ENCODE measurements at regions of chr11 and their contacts with region 1.

Region 1: GRCh38 chr11:121257289-121257688 is 35.3 kb upstream of the SC5D start:
- DNase-seq: peak; percentile 78 to 93 (median 84)
- H3K4me3 ChIP-seq: no peak overlapping the region
- H3K27ac ChIP-seq: peak overlapping the region in 1 of 2 experiments; percentile 43
- H3K4me1 ChIP-seq: peaks cover 4 to 21% (median 7%) of the 10 kb centered on the region in 4 experiments
- H3K27me3 ChIP-seq: no peaks in the 10 kb centered on the region

Region 2: DNA sequence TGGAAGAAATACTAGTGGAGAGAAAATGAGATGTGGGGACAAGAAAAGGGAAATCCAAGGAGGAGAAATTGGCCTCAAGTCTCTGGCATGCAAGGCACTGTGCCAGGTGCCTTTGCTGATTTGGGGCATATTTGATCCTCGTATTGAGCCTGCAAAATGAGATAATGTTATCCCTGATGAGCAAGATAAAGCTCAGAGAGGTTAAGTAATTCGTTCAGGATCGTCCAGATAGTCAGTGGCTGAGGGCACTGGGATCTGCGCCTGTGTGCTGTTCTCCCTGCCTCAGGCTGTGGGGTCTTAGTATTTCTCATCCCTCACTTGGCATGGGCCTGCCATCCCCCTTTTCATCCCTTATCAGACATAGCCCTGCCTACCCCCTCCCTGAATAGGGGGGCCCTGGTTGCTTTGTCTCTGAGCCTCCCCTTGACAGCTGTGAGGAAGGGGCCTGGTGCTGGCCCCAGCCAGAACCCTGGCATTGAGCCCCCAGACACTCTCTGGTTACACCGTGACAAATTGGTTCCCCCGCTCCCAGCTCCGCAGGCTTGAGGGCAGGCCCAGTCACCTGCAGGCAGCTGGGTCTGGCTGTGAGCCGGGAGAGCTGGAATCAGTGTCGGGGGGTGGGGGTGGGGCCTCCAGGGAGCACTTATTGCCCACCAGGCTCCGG is 1613.9 kb before region 1 on chr11:
- CTCF ChIA-PET with region 1: no interaction called
- POLR2A ChIA-PET with region 1: interaction called, 10 read pairs
- DNase-seq: no peak
- H3K4me3 ChIP-seq: no peak overlapping the region
- H3K27ac ChIP-seq: no peak overlapping the region
- H3K4me1 ChIP-seq: no peaks in the 10 kb centered on the region
- H3K27me3 ChIP-seq: peaks cover 0 to 2% (median 0%) of the 10 kb centered on the region in 5 experiments

Region 3: GRCh38 chr11:121246021-121246768 is 11.1 kb before region 1 on chr11:
- CTCF ChIA-PET with region 1: interaction called, 14 read pairs
- POLR2A ChIA-PET with region 1: no interaction called
- DNase-seq: no peak
- H3K4me3 ChIP-seq: no peak overlapping the region
- H3K27ac ChIP-seq: no peak overlapping the region
- H3K4me1 ChIP-seq: peaks cover 0 to 3% (median 1%) of the 10 kb centered on the region in 4 experiments
- H3K27me3 ChIP-seq: no peaks in the 10 kb centered on the region

Region 4: DNA sequence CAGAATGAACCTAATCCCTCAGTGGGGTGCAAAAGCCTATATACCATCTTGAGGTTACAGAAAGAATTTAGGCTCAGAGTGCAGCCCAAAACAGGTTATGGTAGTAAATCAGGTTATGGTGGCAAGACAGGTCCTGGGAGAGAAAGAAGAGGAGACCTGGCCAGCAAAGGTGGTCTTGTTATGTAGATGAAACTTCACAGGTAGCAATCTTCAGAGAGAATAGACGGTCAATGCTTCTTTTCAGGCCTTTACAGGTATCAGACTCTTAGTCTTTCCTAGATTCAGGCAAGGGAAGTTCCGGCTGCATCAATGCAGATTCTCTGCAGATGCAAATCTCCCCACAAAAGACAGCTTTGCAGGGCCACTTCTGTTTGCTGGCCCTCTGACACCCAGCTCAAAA is 149.0 kb after region 1 on chr11:
- CTCF ChIA-PET with region 1: no interaction called
- POLR2A ChIA-PET with region 1: no interaction called
- DNase-seq: no peak
- H3K4me3 ChIP-seq: no peak overlapping the region
- H3K27ac ChIP-seq: no peak overlapping the region
- H3K4me1 ChIP-seq: peaks cover 0 to 11% (median 1%) of the 10 kb centered on the region in 4 experiments
- H3K27me3 ChIP-seq: no peaks in the 10 kb centered on the region

Measured in common myeloid progenitor, CD34-positive (primary cell).